AG04450 (cell line): ENCODE measurements at regions of chr19 and their contacts with region 1.

Region 1: DNA sequence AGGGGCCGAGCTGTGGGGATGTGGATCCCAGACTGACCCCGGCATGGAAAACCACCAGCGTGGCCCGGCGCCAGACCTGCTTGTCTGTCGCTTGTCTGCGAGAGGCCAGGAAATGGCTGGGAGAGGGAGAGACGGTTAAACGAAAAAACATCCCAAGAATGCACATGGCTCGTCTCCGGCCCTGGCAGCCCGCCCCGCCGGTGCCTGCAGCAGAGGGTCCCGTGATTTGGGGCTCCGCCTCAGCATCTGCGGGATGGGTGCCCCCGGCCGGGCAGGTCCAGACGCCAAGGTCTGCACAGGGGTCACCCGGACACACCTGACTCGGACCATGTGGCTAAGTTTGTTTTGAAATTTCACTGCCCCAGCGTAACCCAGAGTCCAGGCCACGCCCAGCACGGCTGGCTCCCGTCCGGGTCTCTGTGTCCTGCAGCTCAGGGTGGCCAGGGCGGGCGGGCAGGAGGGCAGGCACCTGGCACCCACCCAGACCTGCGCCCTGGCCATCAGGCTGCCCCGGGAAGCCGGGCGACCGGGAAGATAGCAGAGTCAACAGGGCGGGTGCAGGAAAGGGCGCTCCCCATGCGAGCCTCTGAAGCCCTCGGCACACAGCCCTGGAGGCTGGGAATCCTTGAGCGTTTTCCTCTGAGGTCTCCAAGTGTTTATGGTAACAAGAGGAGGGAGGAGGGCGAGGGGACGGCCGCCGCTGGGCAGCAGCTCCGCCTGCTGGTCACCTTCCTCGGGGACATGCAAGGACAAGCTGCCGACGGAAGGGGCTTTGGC is 103.2 kb downstream of the GADD45B start:
- DNase-seq: peak; percentile 61
- H3K4me3 ChIP-seq: peak overlapping the region; percentile 64
- H3K27ac ChIP-seq: peak overlapping the region; percentile 75
- H3K27me3 ChIP-seq: no peaks in the 10 kb centered on the region
- CTCF ChIP-seq: peak; percentile 94

Region 2: GRCh38 chr19:2543463-2544442 is 35.3 kb before region 1 on chr19:
- CTCF ChIA-PET with region 1: interaction called, 14 read pairs
- POLR2A ChIA-PET with region 1: interaction called, 12 read pairs
- DNase-seq: peak; percentile 93
- H3K4me3 ChIP-seq: peak overlapping the region; percentile 39
- H3K27ac ChIP-seq: peak overlapping the region; percentile 99
- H3K27me3 ChIP-seq: no peaks in the 10 kb centered on the region
- CTCF ChIP-seq: peak; percentile 38

Region 3: GRCh38 chr19:2561895-2562294 is 17.2 kb before region 1 on chr19:
- CTCF ChIA-PET with region 1: no interaction called
- POLR2A ChIA-PET with region 1: no interaction called
- DNase-seq: no peak
- H3K4me3 ChIP-seq: no peak overlapping the region
- H3K27ac ChIP-seq: no peak overlapping the region
- H3K27me3 ChIP-seq: no peaks in the 10 kb centered on the region
- CTCF ChIP-seq: no peak

Region 4: DNA sequence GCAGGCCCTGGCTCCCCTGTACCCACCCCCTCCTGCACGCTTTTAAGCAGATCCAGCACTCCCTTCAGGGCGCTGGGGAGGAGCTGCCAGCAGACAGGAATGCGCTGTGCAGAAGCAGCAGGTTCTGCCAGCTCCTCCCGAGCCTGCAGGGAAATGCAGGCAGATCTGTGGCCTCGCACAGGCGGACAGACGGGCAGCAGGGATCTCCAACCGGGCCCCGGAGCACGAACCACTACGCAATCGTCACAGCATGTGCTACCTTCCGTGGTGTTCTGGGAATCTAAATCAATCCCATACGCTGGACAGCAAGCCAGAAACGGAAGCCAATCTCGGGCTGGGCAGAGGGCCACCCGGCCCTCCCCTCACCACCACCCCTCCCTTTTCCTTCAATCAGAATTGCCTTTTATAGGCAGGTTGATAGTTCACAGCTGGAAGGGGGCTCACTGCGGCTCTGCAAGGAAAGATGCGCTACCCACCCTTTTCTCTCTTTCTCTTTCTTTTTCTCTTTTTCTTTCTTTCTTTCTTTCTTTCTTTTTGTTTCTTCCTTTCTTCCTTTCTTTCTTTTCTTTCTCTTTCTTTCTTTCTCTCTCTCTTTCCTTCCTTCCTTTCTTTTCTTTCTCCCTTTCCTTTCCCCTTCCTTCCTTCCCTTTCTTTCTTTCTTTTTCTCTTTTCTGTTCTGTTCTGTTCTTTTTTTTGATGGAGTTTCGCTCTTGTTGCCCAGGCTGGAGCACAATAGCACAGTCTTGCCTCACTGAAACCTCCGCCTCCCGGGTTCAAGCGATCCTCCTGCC is 23.5 kb after region 1 on chr19:
- CTCF ChIA-PET with region 1: interaction called, 16 read pairs
- POLR2A ChIA-PET with region 1: interaction called, 5 read pairs
- DNase-seq: peak; percentile 80
- H3K4me3 ChIP-seq: peak overlapping the region; percentile 31
- H3K27ac ChIP-seq: peak overlapping the region; percentile 68
- H3K27me3 ChIP-seq: no peaks in the 10 kb centered on the region
- CTCF ChIP-seq: 0 out of 2 replicates have a peak, but pooled peaks have one; percentile 13

Region 5: DNA sequence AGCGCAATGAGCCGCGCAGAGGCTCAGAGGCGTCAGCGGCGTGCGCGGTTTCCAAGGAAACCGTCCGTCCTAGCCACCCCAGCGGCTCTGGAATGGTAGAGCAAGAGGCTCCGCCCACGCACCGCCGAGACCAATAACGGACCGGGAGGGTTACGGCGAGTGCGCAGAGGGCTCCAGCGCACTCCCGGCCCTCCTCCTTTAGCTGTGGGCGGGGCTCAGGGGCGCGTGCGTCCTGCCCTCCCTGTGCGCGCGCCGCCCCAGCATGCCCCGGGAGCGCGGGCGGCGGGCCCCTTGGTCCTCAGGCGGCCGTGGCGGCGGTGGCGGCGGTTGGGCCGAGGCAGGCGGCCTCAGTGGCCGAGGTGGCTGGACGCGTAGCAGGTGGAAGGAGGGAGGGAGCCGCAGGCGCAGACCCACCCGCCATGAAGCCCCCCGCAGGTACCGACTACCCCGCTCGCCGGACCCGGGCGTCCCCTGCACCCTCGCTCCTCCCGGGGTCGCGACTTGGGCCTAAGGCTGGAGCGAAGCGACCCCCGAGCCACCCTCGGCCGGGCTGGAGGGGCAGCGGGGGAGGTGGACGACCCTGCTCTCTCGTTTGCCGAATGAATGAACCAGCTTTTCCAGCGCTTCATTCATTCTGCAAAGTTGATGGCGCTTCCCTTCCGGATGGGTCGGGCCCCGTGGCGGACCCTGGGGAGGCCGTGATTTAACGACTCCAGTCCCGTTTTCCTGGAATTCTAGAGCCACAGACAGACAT is 206.3 kb after region 1 on chr19 and contains the start of gene THOP1:
- CTCF ChIA-PET with region 1: no interaction called
- POLR2A ChIA-PET with region 1: no interaction called
- DNase-seq: peak; percentile 96
- H3K4me3 ChIP-seq: peak within 1 kb of the TSS; percentile 88
- H3K27ac ChIP-seq: no peak within 1 kb of the TSS
- H3K27me3 ChIP-seq: no peaks in the 10 kb centered on the region
- CTCF ChIP-seq: no peak
- polyA plus RNA-seq, gene THOP1: 35.4 and 45.6 TPM in 2 replicates